ENCODE measurements at regions of chr3 and their contacts with region 1.

Region 1: GRCh38 chr3:47865192-47865591 is 62.3 kb downstream of the DHX30 start:
- DNase-seq: no peak
- ATAC-seq: no peak

Region 2: GRCh38 chr3:47976135-47976732 is 111.0 kb after region 1 on chr3:
- intact Hi-C with region 1: loop called in 1 of 2 experiments (anchors 10 kb)
- DNase-seq: no peak
- ATAC-seq: no peak

Measured in left cardiac atrium (tissue), 4 donors.